Endothelial cell of umbilical vein (primary cell): ENCODE measurements at regions of chr3 and their contacts with region 1.

Region 1: DNA sequence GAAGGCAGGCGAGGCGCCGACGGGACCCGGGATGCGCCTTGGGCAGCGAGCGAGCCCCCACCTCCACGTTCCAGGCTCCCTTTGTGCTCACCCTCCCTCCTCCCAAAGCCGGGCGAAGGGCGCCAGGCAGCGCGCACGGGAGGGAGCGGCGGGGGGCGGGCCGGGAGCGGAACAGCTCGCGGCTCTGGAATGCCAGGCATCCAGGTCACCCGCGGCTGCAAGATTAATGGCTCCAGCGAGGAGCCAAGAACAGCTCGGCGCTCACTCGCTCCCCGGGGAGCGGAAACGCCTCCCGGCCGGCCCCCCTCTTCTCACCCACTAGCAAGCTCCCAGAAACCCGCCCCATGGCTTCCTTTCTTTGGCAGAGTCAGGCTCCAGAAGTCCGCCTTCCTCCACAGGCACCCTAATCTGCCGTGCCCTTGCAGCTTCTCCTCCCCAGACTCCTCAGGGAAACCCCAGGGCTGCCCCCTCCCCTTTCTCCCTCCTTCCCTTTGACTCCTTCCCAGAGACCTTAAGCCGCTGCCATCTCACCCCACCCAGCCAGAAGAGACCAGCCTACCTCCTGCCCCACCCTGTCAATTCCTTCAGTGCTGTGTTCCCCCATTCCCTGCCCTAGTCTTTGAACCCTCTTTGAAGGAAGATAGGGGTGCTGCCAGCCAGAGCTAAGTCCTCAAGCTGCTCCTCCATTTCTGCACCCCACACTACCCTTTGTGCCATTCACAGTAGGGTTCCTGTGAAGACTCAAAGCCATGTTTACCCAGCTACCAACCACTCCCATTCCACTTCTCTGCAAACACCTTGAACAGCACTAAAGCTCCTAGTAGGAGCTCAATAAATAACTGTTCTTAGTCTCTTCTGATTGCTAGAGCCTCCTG is 9.9 kb downstream of the AMOTL2 start:
- DNase-seq: peak; percentile 94
- H3K4me3 ChIP-seq: no peak overlapping the region
- H3K27ac ChIP-seq: peak overlapping the region; percentile 83
- H3K4me1 ChIP-seq: peaks cover 64% of the 10 kb centered on the region
- H3K27me3 ChIP-seq: no peaks in the 10 kb centered on the region
- CTCF ChIP-seq: no peak
- POLR2A ChIP-seq: peak; percentile 76

Region 2: DNA sequence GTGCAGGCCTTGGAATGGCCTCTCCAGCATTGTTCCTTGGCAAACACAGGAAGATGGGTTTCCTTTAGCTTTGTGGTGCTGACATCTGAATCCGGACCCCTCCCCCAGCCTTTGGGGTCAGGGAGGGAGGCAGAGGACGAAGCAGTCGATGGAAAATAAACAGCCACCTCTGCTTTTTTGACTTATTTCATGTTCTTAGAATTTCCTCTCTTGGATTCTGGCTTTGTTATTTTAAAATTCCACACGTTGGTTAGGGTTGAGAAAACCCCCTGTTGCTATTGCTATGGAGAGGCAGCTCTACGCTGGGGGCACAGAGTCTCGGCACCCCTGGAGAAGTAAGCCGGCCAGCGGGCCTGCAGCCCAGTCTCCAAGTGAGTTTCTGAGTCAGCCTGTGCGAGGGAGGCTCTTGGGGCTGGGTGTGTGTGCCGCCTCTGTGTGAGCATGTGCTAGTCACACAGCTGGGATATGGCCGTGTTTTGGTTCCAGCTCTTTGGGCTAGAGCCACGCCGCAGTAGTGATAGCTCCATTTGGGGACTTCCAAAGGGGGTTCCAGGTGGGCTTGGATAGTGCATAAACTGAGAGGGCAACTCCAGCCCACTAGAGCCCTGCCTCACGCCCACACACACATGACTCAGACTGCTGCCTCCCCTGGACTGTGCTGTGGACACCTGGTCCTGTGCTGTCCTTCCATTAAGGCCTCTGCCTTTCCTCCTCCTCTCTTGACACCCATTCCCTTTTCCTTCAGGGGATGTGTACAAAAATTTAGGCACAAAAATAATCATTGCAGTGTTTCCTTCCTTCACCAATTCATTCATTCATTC is 48.8 kb before region 1 on chr3:
- CTCF ChIA-PET with region 1: interaction called, 44 read pairs
- POLR2A ChIA-PET with region 1: interaction called, 63 read pairs
- dilution Hi-C with region 1: no loop called
- intact Hi-C with region 1: loop called (anchors 1 kb)
- DNase-seq: peak; percentile 85
- H3K4me3 ChIP-seq: peak overlapping the region in 1 of 3 experiments; percentile 0
- H3K27ac ChIP-seq: peak overlapping the region; percentile 87
- H3K4me1 ChIP-seq: peaks cover 39% of the 10 kb centered on the region
- H3K27me3 ChIP-seq: no peaks in the 10 kb centered on the region
- CTCF ChIP-seq: no peak
- POLR2A ChIP-seq: peak; percentile 57